ENCODE measurements at regions of chr6 and their contacts with region 1.

Region 1: DNA sequence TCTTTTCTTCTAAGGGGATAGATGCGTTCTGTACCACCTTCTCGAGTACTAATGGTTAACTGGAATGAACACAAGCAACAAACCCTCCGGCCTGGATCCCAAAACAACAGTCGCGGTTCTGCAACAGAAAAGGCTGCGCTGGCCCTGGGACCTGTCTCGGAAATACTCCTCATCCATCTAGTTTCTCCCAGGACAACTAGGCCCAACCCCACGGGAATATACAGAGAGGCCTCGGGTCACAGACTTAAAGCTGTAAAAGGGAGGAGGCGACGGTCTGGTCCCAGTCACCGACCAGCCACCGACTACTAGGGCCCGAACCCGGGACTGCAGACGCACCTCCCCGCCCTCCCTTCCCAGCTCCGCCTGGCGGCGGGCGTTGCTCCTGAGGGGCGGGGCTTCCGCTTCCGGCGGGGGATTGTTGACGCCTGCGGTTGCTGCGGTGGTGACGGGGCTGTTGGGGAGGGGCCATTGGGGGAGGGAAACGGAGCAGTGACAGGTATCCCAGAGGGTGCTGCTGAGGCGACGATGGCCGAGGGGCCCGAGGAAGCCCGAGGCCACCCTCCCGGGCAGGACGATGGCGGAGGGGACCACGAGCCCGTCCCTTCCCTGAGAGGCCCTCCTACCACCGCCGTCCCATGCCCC is at the start of gene FAM8A1:
- DNase-seq: peak; percentile 89 to 97 (median 95)
- ATAC-seq: peak; percentile 88 to 92 (median 90)
- H3K4me3 ChIP-seq: peak within 1 kb of the TSS; percentile 58 to 82
- H3K4me3 Mint-ChIP-seq: peak within 1 kb of the TSS; percentile 85 to 95 (median 86)
- H3K27ac ChIP-seq: peak within 1 kb of the TSS; percentile 77
- H3K27ac Mint-ChIP-seq: peak within 1 kb of the TSS; percentile 84 to 87
- H3K4me1 ChIP-seq: peaks cover 21 to 25% of the 10 kb centered on the region in 2 experiments
- H3K4me1 Mint-ChIP-seq: peaks cover 38 to 47% (median 44%) of the 10 kb centered on the region in 3 donors
- H3K27me3 ChIP-seq: no peaks in the 10 kb centered on the region
- H3K27me3 Mint-ChIP-seq: no peaks in the 10 kb centered on the region
- total RNA-seq, gene FAM8A1: 16.1 to 21.8 (median 16.7) TPM

Region 2: DNA sequence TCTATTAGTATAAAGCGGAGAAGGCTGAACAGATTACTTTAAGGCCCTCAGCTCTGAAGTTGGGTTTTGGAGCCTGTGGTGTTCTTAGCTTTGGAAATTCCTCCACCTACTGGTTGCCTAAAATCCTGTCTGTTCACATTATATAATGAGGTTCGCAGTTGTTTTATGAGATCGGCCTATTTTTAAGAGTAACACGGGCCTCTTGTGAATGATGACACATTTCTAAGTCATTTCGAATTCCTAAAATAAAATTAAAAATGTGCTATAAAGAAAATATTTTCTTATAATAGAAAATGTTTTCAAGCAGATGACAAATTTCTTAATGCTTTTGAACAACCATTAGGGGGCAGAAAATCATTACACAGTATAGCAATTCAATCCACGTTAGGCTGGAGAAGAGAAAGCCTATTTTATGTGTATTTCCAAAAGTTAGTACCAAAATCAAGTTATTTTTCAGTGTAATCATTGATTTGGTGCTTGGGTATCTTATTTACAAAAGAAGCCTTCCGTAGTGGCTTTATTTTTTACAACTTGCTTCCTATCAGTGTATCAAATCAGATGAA is 15.7 kb before region 1 on chr6:
- CTCF ChIA-PET with region 1: interaction called, 5 read pairs
- POLR2A ChIA-PET with region 1: interaction called, 5 to 13 read pairs
- DNase-seq: peak in 4 of 35 experiments; percentile 14 to 66 (median 28)
- ATAC-seq: peak; percentile 68 to 79 (median 71)
- H3K4me3 ChIP-seq: no peak overlapping the region
- H3K4me3 Mint-ChIP-seq: no peak overlapping the region
- H3K27ac ChIP-seq: no peak overlapping the region
- H3K27ac Mint-ChIP-seq: peak overlapping the region in 1 of 2 donors; percentile 30
- H3K4me1 ChIP-seq: peaks cover 3 to 16% of the 10 kb centered on the region in 2 experiments
- H3K4me1 Mint-ChIP-seq: peaks cover 7 to 11% (median 9%) of the 10 kb centered on the region in 3 donors
- H3K27me3 ChIP-seq: peaks cover 0 to 19% of the 10 kb centered on the region in 2 experiments
- H3K27me3 Mint-ChIP-seq: peaks cover 5 to 13% of the 10 kb centered on the region in 2 donors

Region 3: DNA sequence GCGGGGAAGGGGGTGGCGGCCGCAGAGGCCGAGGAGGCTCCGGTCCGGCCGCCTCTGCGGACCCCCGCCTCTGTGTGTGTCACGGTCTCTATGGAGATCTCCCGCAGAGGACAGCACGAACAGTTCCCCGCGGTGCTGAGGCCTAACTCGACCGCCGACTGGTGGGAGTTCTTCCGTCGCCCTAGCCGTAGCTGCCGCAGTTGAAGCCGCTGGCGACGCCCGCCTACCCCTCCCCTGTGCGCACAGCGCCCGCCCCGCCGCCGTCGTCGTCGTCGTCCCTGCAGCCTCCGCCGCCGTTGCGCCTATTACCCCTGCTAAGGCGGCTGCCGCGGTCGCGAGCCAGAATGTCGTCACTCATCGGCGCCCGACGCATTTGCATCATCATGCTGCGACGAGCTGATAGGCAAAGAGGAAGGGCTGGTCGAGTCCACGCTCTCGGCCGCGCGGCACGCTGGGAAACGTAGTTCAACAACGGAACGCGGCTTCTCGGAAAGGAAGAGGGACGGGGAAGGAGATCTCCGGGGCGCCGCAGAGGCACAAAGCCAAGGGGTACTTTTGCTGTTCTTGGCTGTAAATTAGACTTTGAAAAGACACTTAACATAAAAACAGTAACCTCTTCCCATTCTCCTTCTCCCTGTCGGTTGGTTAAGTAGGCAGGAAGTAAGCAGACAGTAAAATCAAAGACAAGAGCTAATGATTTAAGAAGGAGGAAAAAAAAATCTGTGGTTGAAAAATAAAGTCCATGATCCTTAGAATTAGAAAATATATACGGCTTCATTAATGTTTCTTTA is 106.8 kb after region 1 on chr6 and contains the start of gene NUP153:
- CTCF ChIA-PET with region 1: interaction called in 1 of 2 experiments, 9 read pairs
- POLR2A ChIA-PET with region 1: interaction called, 3 to 14 read pairs
- DNase-seq: peak; percentile 96 to 100 (median 99)
- ATAC-seq: peak; percentile 82 to 90 (median 86)
- H3K4me3 ChIP-seq: peak within 1 kb of the TSS; percentile 79 to 87
- H3K4me3 Mint-ChIP-seq: peak within 1 kb of the TSS; percentile 82 to 92 (median 86)
- H3K27ac ChIP-seq: peak within 1 kb of the TSS; percentile 98
- H3K27ac Mint-ChIP-seq: peak within 1 kb of the TSS; percentile 99
- H3K4me1 ChIP-seq: peaks cover 29 to 35% of the 10 kb centered on the region in 2 experiments
- H3K4me1 Mint-ChIP-seq: peaks cover 35 to 44% (median 42%) of the 10 kb centered on the region in 3 donors
- H3K27me3 ChIP-seq: no peaks in the 10 kb centered on the region
- H3K27me3 Mint-ChIP-seq: no peaks in the 10 kb centered on the region
- total RNA-seq, gene NUP153: 46.4 to 58.5 (median 54.2) TPM